ENCODE measurements at regions of chr20 and their contacts with region 1.

Region 1: GRCh38 chr20:40990542-40991120 is 38.0 kb upstream of the TOP1 start:
- DNase-seq: peak; percentile 67 to 82 (median 74)
- H3K4me3 ChIP-seq: no peak overlapping the region
- H3K27ac ChIP-seq: no peak overlapping the region
- H3K4me1 ChIP-seq: no peaks in the 10 kb centered on the region
- H3K27me3 ChIP-seq: no peaks in the 10 kb centered on the region
- CTCF ChIP-seq: peak; percentile 24 to 82 (median 53)
- EP300 ChIP-seq: no peak
- POLR2A ChIP-seq: no peak

Region 2: GRCh38 chr20:40438161-40438840 is 552.3 kb before region 1 on chr20:
- intact Hi-C with region 1: no loop called
- DNase-seq: no peak
- H3K4me3 ChIP-seq: no peak overlapping the region
- H3K27ac ChIP-seq: no peak overlapping the region
- H3K4me1 ChIP-seq: peaks cover 1% of the 10 kb centered on the region
- H3K27me3 ChIP-seq: no peaks in the 10 kb centered on the region
- CTCF ChIP-seq: no peak
- EP300 ChIP-seq: no peak
- POLR2A ChIP-seq: no peak

Region 3: GRCh38 chr20:41086402-41087338 is 96.0 kb after region 1 on chr20:
- intact Hi-C with region 1: loop called in 3 of 4 experiments (anchors 5 to 10 kb)
- DNase-seq: no peak
- H3K4me3 ChIP-seq: no peak overlapping the region
- H3K27ac ChIP-seq: no peak overlapping the region
- H3K4me1 ChIP-seq: no peaks in the 10 kb centered on the region
- H3K27me3 ChIP-seq: no peaks in the 10 kb centered on the region
- CTCF ChIP-seq: no peak
- EP300 ChIP-seq: no peak
- POLR2A ChIP-seq: no peak

Region 4: DNA sequence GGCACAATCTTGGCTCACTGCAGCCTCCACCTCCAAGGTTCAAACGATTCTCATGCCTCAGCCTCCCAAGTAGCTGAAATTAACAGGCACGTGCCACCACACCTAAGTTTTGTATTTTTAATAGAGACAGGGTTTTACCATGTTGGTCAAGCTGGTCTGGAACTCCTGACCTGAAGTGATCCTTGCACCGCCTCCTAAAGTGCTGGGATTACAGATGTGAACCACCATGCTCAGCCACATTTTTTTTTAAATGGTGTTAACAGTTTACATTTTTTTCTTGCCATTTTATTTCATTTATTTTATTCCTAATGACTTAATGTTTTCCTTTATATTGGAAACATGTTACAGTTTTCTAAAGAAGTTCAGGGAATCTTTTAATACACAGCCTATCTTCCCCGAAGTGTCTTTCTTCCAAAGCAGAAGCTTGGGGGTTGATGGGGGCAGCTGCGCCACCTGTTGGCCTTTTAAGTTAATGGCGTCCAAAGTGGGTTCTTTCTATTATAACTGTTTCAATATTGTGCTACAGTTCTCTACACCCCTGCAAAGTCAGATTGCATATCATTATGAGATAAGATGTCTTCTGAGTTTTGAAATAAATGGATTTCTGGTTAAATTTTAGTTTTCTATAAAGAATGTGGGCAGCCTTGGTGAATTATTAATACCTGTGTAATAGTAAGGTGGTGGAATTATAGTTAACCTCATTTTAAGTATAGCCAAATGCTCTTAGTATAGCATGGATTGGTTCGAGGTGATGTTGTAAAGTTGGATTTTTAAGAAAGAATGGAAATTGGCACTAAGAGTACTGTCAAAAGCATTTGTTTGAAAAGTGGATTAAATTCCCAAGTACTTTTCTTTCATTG is 104.7 kb after region 1 on chr20:
- intact Hi-C with region 1: loop called in 3 of 4 experiments (anchors 5 to 10 kb)
- DNase-seq: peak; percentile 22 to 74 (median 61)
- H3K4me3 ChIP-seq: no peak overlapping the region
- H3K27ac ChIP-seq: no peak overlapping the region
- H3K4me1 ChIP-seq: no peaks in the 10 kb centered on the region
- H3K27me3 ChIP-seq: no peaks in the 10 kb centered on the region
- CTCF ChIP-seq: peak; percentile 61 to 75 (median 64)
- EP300 ChIP-seq: no peak
- POLR2A ChIP-seq: no peak

Measured in ovary (tissue), 10 donors.